AG04449 (cell line): ENCODE measurements at regions of chr12 and their contacts with region 1.

Region 1: GRCh38 chr12:89504560-89505346 is 19.8 kb downstream of the GALNT4 start:
- DNase-seq: no peak
- H3K4me3 ChIP-seq: no peak overlapping the region
- CTCF ChIP-seq: no peak

Region 2: DNA sequence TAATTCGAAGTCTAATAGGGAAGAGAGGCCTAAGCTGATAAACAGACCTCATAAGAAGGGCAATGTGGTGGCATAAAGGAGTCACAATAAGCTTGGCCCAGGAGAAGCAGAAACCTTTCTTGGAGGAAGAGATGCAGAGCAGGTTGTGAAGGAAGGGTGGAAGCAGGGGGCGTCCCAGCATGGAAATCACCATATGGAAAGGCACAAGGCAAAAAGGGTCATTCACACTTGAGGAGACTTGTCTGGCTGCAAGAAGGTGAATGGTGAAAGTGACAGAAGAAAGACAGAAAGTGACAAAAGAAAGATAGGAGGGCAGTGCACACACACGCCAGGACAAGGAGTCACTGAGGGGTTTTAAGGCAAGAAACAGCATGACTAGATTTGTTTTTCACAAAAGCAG is 18.5 kb before region 1 on chr12:
- CTCF ChIA-PET with region 1: no interaction called
- POLR2A ChIA-PET with region 1: no interaction called
- DNase-seq: no peak
- H3K4me3 ChIP-seq: no peak overlapping the region
- CTCF ChIP-seq: no peak

Region 3: GRCh38 chr12:89524541-89525285 is 20.0 kb after region 1 on chr12 and contains the start of gene GALNT4:
- CTCF ChIA-PET with region 1: interaction called, 17 read pairs
- POLR2A ChIA-PET with region 1: no interaction called
- DNase-seq: peak; percentile 40
- H3K4me3 ChIP-seq: peak within 1 kb of the TSS; percentile 97
- CTCF ChIP-seq: peak; percentile 90